ENCODE measurements at regions of chr7 and their contacts with region 1.

Region 1: GRCh38 chr7:139767561-139767982 is 10.2 kb downstream of the HIPK2 start:
- DNase-seq: peak in 4 of 14 experiments; percentile 18 to 79 (median 60)
- ATAC-seq: peak; percentile 76
- H3K4me3 ChIP-seq: no peak overlapping the region
- H3K4me3 Mint-ChIP-seq: peak overlapping the region; percentile 21
- H3K27ac ChIP-seq: peak overlapping the region; percentile 75 to 84
- H3K27ac Mint-ChIP-seq: peak overlapping the region; percentile 86
- H3K4me1 ChIP-seq: peaks cover 60% of the 10 kb centered on the region
- H3K4me1 Mint-ChIP-seq: peaks cover 94% of the 10 kb centered on the region
- H3K27me3 ChIP-seq: no peaks in the 10 kb centered on the region
- H3K27me3 Mint-ChIP-seq: no peaks in the 10 kb centered on the region
- CTCF ChIP-seq: no peak

Region 2: GRCh38 chr7:139737221-139738100 is 30.1 kb before region 1 on chr7:
- CTCF ChIA-PET with region 1: no interaction called
- POLR2A ChIA-PET with region 1: interaction called, 21 read pairs
- intact Hi-C with region 1: no loop called
- DNase-seq: peak in 6 of 14 experiments; percentile 19 to 45 (median 24)
- ATAC-seq: peak; percentile 72
- H3K4me3 ChIP-seq: no peak overlapping the region
- H3K4me3 Mint-ChIP-seq: peak overlapping the region; percentile 72
- H3K27ac ChIP-seq: peak overlapping the region in 1 of 2 donors; percentile 64
- H3K27ac Mint-ChIP-seq: peak overlapping the region; percentile 91
- H3K4me1 ChIP-seq: peaks cover 53% of the 10 kb centered on the region
- H3K4me1 Mint-ChIP-seq: peaks cover 81% of the 10 kb centered on the region
- H3K27me3 ChIP-seq: no peaks in the 10 kb centered on the region
- H3K27me3 Mint-ChIP-seq: no peaks in the 10 kb centered on the region
- CTCF ChIP-seq: no peak

Region 3: DNA sequence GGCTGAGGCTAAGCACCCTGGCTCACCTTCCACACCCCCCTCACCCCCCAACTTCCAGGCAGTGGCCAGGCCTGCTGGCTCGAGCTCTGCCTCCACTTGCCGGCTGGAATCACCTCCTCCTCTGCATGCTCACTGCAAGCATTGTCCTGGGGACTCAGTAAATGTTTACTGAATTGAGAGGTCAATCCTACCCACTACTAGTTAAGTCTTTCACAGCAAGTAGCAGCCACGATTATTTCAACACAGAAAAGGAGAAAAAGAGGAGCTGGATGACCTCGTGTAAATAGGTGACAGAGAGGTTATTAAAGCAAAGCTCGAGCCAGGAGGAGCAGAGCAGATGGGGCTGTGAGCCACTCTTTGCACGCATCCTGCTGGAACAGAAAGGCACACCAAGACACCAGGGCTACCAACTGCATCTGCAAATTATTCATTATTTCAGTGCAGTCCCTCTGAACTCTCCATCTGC is 21.9 kb before region 1 on chr7:
- CTCF ChIA-PET with region 1: no interaction called
- POLR2A ChIA-PET with region 1: interaction called, 8 read pairs
- intact Hi-C with region 1: loop called in 1 of 2 experiments (anchors 2 kb)
- DNase-seq: no peak
- ATAC-seq: no peak
- H3K4me3 ChIP-seq: no peak overlapping the region
- H3K4me3 Mint-ChIP-seq: no peak overlapping the region
- H3K27ac ChIP-seq: no peak overlapping the region
- H3K27ac Mint-ChIP-seq: no peak overlapping the region
- H3K4me1 ChIP-seq: peaks cover 37% of the 10 kb centered on the region
- H3K4me1 Mint-ChIP-seq: peaks cover 62% of the 10 kb centered on the region
- H3K27me3 ChIP-seq: no peaks in the 10 kb centered on the region
- H3K27me3 Mint-ChIP-seq: no peaks in the 10 kb centered on the region
- CTCF ChIP-seq: no peak

Measured in CD4-positive, alpha-beta T cell (primary cell).